Caco-2 (cell line): ENCODE measurements at regions of chr14 and their contacts with region 1.

Region 1: DNA sequence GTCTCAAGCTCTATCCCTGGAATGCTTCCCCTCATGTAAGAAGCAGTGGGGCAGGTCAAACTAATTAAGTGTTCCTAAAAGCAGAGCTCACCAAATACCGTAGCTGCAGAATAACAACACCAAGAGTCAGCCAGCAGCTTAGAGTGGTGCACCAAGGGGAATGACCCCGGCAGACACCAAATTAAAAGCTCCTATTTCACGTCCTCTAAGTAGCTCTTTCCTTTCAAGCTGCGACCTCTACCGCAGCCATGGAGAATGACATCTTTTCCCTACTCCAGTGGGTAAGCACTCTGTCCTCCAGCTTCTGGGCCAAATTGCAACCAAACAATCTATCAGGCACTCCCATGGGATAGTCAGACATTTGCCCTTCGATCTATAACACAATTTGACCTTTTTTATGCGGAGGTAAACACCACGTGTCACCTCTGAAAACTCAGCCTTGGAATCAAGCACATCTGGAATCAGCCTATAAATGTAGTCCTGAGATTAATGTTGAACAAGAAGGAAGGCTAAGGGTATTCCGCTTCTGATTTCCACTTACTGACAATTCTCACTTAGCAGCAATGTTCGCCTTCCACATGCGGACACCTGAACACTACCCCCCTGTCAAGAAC is 67.6 kb upstream of the CDKN3 start:
- DNase-seq: peak; percentile 51 to 53
- H3K4me3 ChIP-seq: no peak overlapping the region
- H3K4me3 Mint-ChIP-seq: no peak overlapping the region
- H3K27ac Mint-ChIP-seq: no peak overlapping the region
- H3K4me1 ChIP-seq: no peaks in the 10 kb centered on the region
- H3K4me1 Mint-ChIP-seq: peaks cover 5% of the 10 kb centered on the region
- H3K27me3 ChIP-seq: no peaks in the 10 kb centered on the region
- H3K27me3 Mint-ChIP-seq: no peaks in the 10 kb centered on the region
- CTCF ChIP-seq: peak; percentile 70 to 76

Region 2: GRCh38 chr14:54253195-54253947 is 75.8 kb before region 1 on chr14:
- CTCF ChIA-PET with region 1: interaction called, 19 read pairs
- POLR2A ChIA-PET with region 1: no interaction called
- intact Hi-C with region 1: loop called (anchors 1 kb)
- DNase-seq: no peak
- H3K4me3 ChIP-seq: no peak overlapping the region
- H3K4me3 Mint-ChIP-seq: no peak overlapping the region
- H3K27ac Mint-ChIP-seq: peak overlapping the region; percentile 93
- H3K4me1 ChIP-seq: peaks cover 36% of the 10 kb centered on the region
- H3K4me1 Mint-ChIP-seq: peaks cover 32% of the 10 kb centered on the region
- H3K27me3 ChIP-seq: no peaks in the 10 kb centered on the region
- H3K27me3 Mint-ChIP-seq: no peaks in the 10 kb centered on the region
- CTCF ChIP-seq: no peak